ENCODE measurements at regions of chr7 and their contacts with region 1.

Region 1: GRCh38 chr7:101273206-101273605 is 28.3 kb upstream of the FIS1 start:
- DNase-seq: no peak
- H3K4me3 ChIP-seq: no peak overlapping the region
- H3K27ac ChIP-seq: no peak overlapping the region
- H3K4me1 ChIP-seq: no peaks in the 10 kb centered on the region
- H3K27me3 ChIP-seq: peaks cover 58% of the 10 kb centered on the region
- CTCF ChIP-seq: no peak

Region 2: DNA sequence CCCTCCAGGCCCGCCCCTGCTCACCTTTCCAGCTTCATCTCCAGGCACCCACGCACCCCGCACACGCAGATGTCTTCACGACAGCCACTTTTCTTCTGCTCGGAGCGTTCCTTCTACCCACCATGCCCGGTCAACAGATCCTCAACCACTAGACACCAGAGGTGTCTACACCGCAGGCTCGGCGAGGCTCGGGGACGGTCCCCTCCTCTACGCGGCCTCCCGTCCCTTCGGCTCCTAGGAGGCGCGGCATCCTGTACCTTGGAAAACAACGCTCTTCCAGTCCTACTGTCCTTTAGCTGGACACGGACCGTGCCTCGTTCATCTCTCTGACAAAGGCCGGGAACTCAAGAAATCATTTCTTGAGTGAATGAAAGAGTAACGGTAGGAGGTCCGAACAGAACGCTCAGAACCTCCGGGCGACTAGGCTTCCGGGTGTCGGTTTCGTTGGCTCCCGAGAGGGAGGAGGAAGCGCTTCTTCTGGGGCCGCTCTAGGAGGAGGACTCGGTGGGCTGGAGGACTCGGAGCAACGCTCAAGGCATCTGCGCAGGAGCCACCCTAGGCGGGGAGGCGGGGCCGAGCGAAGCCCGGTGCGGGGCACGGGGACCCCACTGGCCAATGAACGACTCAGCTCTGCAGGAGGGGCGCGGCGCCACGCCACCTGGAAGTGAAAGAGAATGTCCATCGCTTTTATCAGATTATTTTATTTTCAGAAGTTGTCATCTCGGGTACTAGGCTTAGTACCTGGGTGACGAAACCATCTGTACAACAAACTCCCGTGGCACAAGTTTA is 21.1 kb before region 1 on chr7:
- CTCF ChIA-PET with region 1: no interaction called
- POLR2A ChIA-PET with region 1: no interaction called
- intact Hi-C with region 1: no loop called
- DNase-seq: peak; percentile 94 to 100
- H3K4me3 ChIP-seq: peak overlapping the region; percentile 74
- H3K27ac ChIP-seq: peak overlapping the region; percentile 48
- H3K4me1 ChIP-seq: peaks cover 17% of the 10 kb centered on the region
- H3K27me3 ChIP-seq: no peaks in the 10 kb centered on the region
- CTCF ChIP-seq: no peak

Region 3: DNA sequence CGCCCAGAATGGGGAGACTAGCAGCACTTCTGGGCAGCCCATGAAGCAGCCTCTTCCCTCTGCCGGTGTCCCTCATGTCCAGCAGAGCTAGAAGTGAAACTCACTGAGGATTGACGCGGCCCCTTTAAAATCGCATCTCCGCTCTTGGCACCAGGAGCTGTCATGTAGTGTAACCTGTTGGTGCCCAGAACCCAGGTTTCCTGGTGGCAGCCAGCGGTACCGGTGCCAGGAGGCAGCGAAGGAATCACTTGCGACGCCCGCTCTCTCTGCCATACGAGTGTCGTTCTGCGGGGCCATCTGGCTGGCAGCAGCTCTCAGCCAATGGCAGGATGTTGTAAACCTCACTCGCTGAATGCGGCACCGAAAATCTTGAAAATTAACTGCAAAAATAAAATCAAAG is 626.9 kb after region 1 on chr7:
- CTCF ChIA-PET with region 1: interaction called, 15 read pairs
- POLR2A ChIA-PET with region 1: no interaction called
- intact Hi-C with region 1: no loop called
- DNase-seq: no peak
- H3K4me3 ChIP-seq: no peak overlapping the region
- H3K27ac ChIP-seq: no peak overlapping the region
- H3K4me1 ChIP-seq: no peaks in the 10 kb centered on the region
- H3K27me3 ChIP-seq: no peaks in the 10 kb centered on the region
- CTCF ChIP-seq: no peak